ENCODE measurements at regions of chr2 and their contacts with region 1.

Region 1: DNA sequence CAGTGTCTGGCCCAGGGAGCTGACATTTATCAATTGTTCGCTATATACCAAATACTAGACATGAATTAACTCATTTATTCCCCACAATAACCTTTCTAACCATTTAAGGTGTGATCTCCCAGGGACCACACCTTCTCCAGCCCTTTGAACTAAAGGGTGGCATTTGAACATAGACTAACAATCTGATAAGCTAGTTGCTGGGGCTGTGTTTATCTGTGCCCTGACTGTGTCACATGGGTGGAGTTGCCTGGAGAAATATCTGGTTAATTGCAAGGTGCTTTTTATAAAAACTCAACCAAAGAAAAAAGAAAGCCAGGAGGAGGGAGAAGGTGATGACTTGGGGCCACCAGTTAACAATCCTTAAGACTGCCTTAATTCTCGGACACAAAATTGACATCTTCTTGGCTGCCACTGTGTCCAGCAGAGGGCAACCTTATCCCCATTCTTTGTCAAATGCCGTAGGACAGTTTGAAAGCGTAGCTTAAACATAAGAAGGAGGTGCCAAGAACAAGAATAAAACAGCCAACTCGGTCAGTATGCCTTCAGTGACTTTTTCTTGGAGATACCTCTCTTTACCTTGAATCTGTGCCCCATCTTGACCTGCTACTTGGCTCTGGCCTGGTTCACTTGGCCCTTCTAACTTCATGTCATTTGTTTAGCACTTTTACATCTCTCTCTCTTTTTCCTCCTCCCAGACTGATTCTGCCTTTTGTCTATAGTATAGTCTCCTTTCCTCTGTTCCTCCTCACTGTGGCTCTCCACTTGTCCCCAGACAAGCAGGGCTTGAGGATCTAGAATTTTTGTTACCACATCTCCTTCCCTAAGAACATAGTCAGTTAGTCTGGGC is 183.4 kb downstream of the MYO3B start:
- DNase-seq: peak; percentile 69
- H3K4me3 ChIP-seq: no peak overlapping the region
- H3K27ac ChIP-seq: no peak overlapping the region
- H3K4me1 ChIP-seq: no peaks in the 10 kb centered on the region
- H3K27me3 ChIP-seq: peaks cover 23% of the 10 kb centered on the region
- CTCF ChIP-seq: peak; percentile 77

Region 2: DNA sequence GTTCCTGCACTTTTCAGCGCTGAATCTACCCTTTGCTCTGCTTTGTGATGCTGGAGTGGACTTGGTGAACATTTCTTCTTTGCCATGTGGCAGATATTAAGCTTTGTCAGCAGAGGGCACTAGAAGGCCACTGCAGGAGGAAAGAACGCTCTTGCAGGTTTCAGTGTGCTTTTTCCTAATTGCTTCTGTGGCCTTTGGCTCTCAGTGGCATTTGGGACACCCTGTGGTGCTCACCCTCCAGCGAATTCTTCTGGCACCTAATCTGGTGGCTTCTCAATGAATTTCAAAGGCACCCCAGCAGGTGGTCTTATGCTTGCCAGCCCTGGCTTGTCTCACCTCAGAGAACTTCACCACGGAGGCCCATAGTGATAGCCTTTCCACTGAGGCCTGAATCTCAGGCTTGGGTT is 36.7 kb before region 1 on chr2:
- CTCF ChIA-PET with region 1: interaction called, 4 read pairs
- POLR2A ChIA-PET with region 1: no interaction called
- intact Hi-C with region 1: loop called (anchors 2 kb)
- DNase-seq: peak; percentile 74
- H3K4me3 ChIP-seq: no peak overlapping the region
- H3K27ac ChIP-seq: no peak overlapping the region
- H3K4me1 ChIP-seq: no peaks in the 10 kb centered on the region
- H3K27me3 ChIP-seq: no peaks in the 10 kb centered on the region
- CTCF ChIP-seq: peak; percentile 84

Region 3: DNA sequence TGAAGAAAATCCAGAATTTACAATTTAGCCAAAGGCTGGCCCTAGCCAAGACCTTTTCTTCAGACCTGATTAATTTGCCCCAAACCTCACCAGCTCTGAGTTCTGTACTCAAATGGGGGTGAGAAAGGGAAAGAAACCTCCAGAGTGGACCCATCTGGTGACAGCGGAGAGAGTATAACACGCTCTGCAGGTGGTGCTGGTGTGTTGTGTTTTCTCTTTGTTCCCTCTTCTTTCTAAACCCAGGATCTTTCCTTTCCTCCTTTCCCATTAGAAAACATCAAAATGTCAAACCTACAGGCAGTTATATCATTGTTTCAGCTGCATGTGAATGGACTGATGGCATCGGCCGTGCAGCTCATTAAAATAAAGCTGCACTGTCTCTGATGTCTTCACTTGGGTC is 100.6 kb after region 1 on chr2:
- CTCF ChIA-PET with region 1: no interaction called
- POLR2A ChIA-PET with region 1: no interaction called
- intact Hi-C with region 1: no loop called
- DNase-seq: no peak
- H3K4me3 ChIP-seq: no peak overlapping the region
- H3K27ac ChIP-seq: no peak overlapping the region
- H3K4me1 ChIP-seq: no peaks in the 10 kb centered on the region
- H3K27me3 ChIP-seq: no peaks in the 10 kb centered on the region
- CTCF ChIP-seq: 0 out of 2 replicates have a peak, but pooled peaks have one; percentile 26

Region 4: GRCh38 chr2:171330155-171330956 is 969.0 kb after region 1 on chr2:
- CTCF ChIA-PET with region 1: no interaction called
- POLR2A ChIA-PET with region 1: no interaction called
- intact Hi-C with region 1: no loop called
- DNase-seq: no peak
- H3K4me3 ChIP-seq: no peak overlapping the region
- H3K27ac ChIP-seq: no peak overlapping the region
- H3K4me1 ChIP-seq: peaks cover 15% of the 10 kb centered on the region
- H3K27me3 ChIP-seq: no peaks in the 10 kb centered on the region
- CTCF ChIP-seq: no peak